Gastrocnemius medialis (tissue), 4 donors: ENCODE measurements at regions of chr4 and their contacts with region 1.

Region 1: DNA sequence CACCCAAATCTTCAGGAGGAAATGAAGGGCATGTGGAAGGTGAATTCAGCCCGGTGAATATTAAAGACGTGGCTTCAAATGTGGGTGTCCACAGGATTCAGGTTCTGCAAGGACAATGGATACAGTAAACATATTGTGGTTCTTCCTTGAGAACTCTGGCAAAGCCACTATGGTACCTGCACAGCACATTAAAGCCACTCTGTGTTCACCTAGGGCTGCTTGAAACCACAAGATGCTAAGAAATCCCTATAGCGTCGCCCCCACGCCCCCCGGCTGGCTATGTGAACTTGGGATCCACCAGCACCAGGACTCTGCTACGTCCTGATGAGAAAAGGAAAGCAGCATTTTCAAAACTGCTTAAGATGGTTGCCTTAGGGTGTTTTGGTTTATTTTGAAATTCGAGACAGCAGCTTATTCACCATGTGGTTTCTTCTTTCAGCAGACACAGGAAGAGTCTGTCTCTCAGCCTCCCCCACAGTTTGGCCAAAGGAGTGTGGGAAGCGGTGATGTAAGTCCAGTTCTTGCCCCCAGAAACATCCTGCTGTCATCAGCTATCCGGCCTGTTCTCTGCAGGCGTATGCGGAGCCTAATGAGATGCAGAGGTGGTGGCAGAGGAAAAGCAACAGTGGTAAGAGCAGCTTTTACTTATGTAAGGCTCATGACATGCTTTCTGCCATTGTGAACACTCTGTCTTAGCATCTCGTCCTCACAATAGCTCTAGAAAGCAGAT is 111.5 kb downstream of the AFAP1 start:
- DNase-seq: peak; percentile 67 to 71
- ATAC-seq: peak; percentile 47 to 76
- H3K4me3 ChIP-seq: peak overlapping the region in 2 of 4 donors; percentile 6 to 19
- H3K27ac ChIP-seq: peak overlapping the region; percentile 82 to 92 (median 85)
- H3K4me1 ChIP-seq: peaks cover 42 to 58% of the 10 kb centered on the region in 2 donors
- H3K27me3 ChIP-seq: no peaks in the 10 kb centered on the region
- CTCF ChIP-seq: no peak
- POLR2A ChIP-seq: no peak

Region 2: GRCh38 chr4:7557447-7557846 is 270.7 kb before region 1 on chr4:
- in situ Hi-C with region 1: no loop called
- intact Hi-C with region 1: no loop called
- DNase-seq: no peak
- ATAC-seq: no peak
- H3K4me3 ChIP-seq: no peak overlapping the region
- H3K27ac ChIP-seq: no peak overlapping the region
- H3K4me1 ChIP-seq: no peaks in the 10 kb centered on the region
- H3K27me3 ChIP-seq: no peaks in the 10 kb centered on the region
- CTCF ChIP-seq: no peak
- POLR2A ChIP-seq: no peak

Region 3: DNA sequence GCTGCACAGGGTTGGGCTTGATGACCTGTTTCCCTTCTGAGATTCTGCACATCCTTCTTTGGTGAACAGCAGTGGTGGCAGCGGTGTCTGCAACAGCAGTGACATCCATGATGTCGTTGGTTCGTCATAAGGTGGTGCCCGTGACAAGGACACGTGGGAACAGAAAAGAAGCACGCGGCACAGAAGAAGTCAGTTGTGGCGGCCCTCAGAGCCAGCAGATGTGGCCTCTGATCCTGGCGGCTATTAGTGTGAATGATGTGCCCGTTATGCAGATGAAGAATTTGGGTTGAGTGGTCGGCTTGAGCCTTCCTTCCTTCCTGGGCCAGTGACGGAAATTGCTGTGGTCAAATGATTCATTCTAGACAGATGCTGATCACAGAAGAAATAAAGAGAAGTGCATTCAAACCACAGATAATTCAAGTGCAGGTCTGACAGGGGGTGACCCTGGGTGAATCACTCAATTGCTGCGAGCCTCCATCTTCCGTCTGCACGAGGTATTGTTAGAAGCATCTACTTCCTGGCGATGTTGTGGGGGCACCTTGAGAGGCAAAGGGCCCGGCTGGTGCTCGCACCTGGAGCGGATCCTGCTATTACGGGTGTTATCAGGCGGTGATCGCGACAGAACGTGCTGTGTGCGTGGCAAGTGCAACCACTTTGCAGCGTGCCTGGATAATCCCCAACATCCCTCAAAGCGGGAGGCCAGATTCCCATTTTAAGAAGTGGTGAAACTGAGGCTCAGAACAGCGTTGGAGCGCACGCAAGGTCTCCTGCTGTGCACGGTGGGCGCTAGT is 178.2 kb before region 1 on chr4:
- in situ Hi-C with region 1: no loop called
- intact Hi-C with region 1: no loop called
- DNase-seq: peak in 1 of 2 donors; percentile 22
- ATAC-seq: no peak
- H3K4me3 ChIP-seq: no peak overlapping the region
- H3K27ac ChIP-seq: no peak overlapping the region
- H3K4me1 ChIP-seq: no peaks in the 10 kb centered on the region
- H3K27me3 ChIP-seq: no peaks in the 10 kb centered on the region
- CTCF ChIP-seq: no peak
- POLR2A ChIP-seq: no peak

Region 4: DNA sequence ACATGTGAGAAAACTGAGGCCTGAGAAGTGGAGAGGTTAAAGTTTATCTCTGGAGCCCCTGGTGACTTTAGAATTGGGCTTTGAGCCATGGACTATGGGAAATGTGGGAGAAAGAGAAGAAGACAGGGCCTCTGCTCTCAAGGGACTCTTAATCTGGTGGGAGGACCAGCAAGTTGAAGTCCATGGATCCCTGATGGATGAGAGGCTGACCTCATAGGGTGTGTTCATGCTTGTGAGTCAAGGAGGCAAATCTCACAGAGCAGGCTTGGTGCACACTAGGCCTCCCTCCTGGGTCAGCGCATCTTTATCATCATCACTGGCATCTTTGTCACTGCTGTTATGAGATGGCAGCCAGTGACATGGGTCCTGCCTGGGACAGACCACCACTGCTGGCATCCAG is 100.4 kb before region 1 on chr4:
- in situ Hi-C with region 1: no loop called
- intact Hi-C with region 1: no loop called
- DNase-seq: no peak
- ATAC-seq: no peak
- H3K4me3 ChIP-seq: no peak overlapping the region
- H3K27ac ChIP-seq: no peak overlapping the region
- H3K4me1 ChIP-seq: no peaks in the 10 kb centered on the region
- H3K27me3 ChIP-seq: no peaks in the 10 kb centered on the region
- CTCF ChIP-seq: no peak
- POLR2A ChIP-seq: no peak

Region 5: GRCh38 chr4:7872264-7872771 is 44.2 kb after region 1 on chr4:
- in situ Hi-C with region 1: no loop called
- intact Hi-C with region 1: loop called (anchors 1 kb)
- DNase-seq: peak; percentile 85 to 91
- ATAC-seq: peak; percentile 89
- H3K4me3 ChIP-seq: peak overlapping the region in 3 of 4 donors; percentile 8 to 35 (median 34)
- H3K27ac ChIP-seq: peak overlapping the region; percentile 78 to 83 (median 82)
- H3K4me1 ChIP-seq: peaks cover 24 to 25% of the 10 kb centered on the region in 2 donors
- H3K27me3 ChIP-seq: no peaks in the 10 kb centered on the region
- CTCF ChIP-seq: no peak
- POLR2A ChIP-seq: no peak

Region 6: GRCh38 chr4:7939377-7940108 is 111.4 kb after region 1 on chr4 and contains the start of gene AFAP1:
- in situ Hi-C with region 1: no loop called
- intact Hi-C with region 1: loop called (anchors 5 kb)
- DNase-seq: peak; percentile 58 to 75
- ATAC-seq: peak; percentile 82 to 89
- H3K4me3 ChIP-seq: peak within 1 kb of the TSS; percentile 59 to 79 (median 68)
- H3K27ac ChIP-seq: peak within 1 kb of the TSS; percentile 42 to 77 (median 63)
- H3K4me1 ChIP-seq: peaks cover 0 to 4% of the 10 kb centered on the region in 2 donors
- H3K27me3 ChIP-seq: peaks cover 0 to 20% (median 19%) of the 10 kb centered on the region in 3 donors
- CTCF ChIP-seq: no peak
- POLR2A ChIP-seq: peak; percentile 48 to 67
- total RNA-seq, gene AFAP1: 1.5 to 8.6 (median 3.5) TPM

Region 7: DNA sequence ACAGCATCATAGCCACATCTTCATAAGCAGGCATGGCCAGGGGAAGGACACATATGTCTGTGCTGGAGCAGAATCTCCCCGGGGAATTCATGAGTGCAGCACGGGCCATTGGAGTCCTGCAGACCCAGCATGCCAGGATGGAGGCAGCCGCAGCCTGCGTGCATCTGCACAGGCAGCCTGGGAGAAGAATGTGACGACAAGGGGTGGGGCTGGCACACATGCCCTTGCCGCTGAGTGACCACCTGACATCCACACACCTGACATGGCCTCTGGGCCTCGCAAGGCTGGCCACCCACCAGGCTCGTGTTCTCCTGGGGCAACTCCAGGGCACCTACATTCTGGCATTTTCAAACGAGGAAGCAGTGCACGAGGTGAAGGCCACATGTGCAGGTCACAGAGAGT is 177.7 kb after region 1 on chr4:
- in situ Hi-C with region 1: no loop called
- intact Hi-C with region 1: no loop called
- DNase-seq: peak; percentile 39 to 52
- ATAC-seq: peak; percentile 10 to 19
- H3K4me3 ChIP-seq: no peak overlapping the region
- H3K27ac ChIP-seq: peak overlapping the region; percentile 50 to 70 (median 60)
- H3K4me1 ChIP-seq: no peaks in the 10 kb centered on the region
- H3K27me3 ChIP-seq: no peaks in the 10 kb centered on the region
- CTCF ChIP-seq: no peak
- POLR2A ChIP-seq: no peak

Region 8: DNA sequence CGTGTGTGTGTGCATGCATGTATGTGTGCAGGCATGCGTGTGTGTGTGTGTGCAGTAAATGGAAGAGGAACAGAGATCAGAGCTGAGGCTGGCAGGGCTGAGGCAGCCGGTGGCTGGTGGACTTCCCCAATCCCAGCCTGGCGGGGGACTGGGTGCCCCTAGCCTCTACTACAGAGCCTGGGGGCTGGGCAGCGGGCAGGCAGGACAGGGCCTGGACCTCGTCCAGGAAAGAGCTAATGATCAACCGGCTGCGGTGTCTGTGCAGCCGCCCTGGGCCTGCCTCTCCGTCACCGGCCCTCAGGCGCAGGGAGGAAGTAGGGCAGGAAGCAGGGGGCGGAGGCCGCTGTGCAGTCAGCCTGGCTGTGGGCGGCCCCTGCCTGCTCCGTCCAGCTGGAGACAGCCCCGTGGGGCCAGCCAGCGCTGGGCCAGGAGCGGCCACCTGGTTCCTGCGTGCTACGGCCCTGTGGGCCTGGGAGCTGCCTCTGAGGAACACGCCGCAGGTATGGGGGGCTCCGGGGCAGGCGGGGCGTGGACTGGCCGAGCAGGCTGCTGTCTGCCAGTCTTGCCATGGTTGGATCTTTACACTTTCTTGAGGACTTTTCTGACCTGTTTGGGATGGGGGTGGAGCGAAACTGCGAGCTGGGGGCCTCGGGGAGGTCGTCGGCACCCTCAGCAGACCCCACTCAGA is 370.9 kb after region 1 on chr4 and contains the start of gene SH3TC1:
- in situ Hi-C with region 1: loop called in 1 of 4 experiments (anchors 25 kb)
- intact Hi-C with region 1: loop called (anchors 10 kb)
- DNase-seq: peak; percentile 63 to 69
- ATAC-seq: peak; percentile 32 to 38
- H3K4me3 ChIP-seq: peak within 1 kb of the TSS; percentile 32 to 50 (median 46)
- H3K27ac ChIP-seq: peak within 1 kb of the TSS; percentile 37 to 73 (median 63)
- H3K4me1 ChIP-seq: peaks cover 18 to 33% of the 10 kb centered on the region in 2 donors
- H3K27me3 ChIP-seq: no peaks in the 10 kb centered on the region
- CTCF ChIP-seq: no peak
- POLR2A ChIP-seq: peak; percentile 40 to 49
- total RNA-seq, gene SH3TC1: 2.9 to 8.5 (median 5.8) TPM

Region 9: GRCh38 chr4:8428293-8429097 is 600.3 kb after region 1 on chr4:
- in situ Hi-C with region 1: loop called in 1 of 4 experiments (anchors 25 kb)
- intact Hi-C with region 1: loop called (anchors 10 kb)
- DNase-seq: peak; percentile 70 to 90
- ATAC-seq: peak; percentile 94
- H3K4me3 ChIP-seq: peak overlapping the region; percentile 74 to 100 (median 86)
- H3K27ac ChIP-seq: peak overlapping the region; percentile 91 to 99 (median 93)
- H3K4me1 ChIP-seq: peaks cover 20 to 25% of the 10 kb centered on the region in 2 donors
- H3K27me3 ChIP-seq: no peaks in the 10 kb centered on the region
- CTCF ChIP-seq: peak in 3 of 5 experiments; percentile 21 to 44 (median 27)
- POLR2A ChIP-seq: peak; percentile 69 to 89